ENCODE measurements at regions of chr1 and their contacts with region 1.

Region 1: DNA sequence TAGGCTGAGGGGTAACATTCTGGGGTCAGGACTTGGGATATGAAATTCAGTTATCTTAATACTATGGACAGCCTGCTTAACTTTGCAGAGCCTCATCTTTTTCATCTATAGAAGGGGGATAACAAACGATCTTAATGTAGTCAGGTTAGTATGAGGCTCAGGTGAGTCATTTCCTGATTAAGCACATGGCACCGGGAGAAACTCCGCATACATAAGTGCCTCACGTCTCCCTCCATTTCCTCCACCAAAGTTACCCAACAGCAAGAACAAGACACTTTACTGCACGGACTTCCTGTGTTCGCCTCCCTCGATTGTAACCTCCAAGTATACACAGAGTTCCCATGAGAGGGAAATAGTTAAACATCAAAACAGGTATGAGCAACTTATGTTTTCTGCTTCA is 112.7 kb upstream of the COA6 start:
- DNase-seq: peak; percentile 69
- H3K4me3 Mint-ChIP-seq: no peak overlapping the region
- H3K27ac Mint-ChIP-seq: no peak overlapping the region
- H3K4me1 Mint-ChIP-seq: peaks cover 13% of the 10 kb centered on the region
- H3K27me3 Mint-ChIP-seq: peaks cover 36% of the 10 kb centered on the region

Region 2: GRCh38 chr1:234212764-234213657 is 47.6 kb before region 1 on chr1:
- CTCF ChIA-PET with region 1: interaction called, 12 read pairs
- intact Hi-C with region 1: no loop called
- DNase-seq: peak; percentile 56
- H3K4me3 Mint-ChIP-seq: no peak overlapping the region
- H3K27ac Mint-ChIP-seq: no peak overlapping the region
- H3K4me1 Mint-ChIP-seq: peaks cover 12% of the 10 kb centered on the region
- H3K27me3 Mint-ChIP-seq: peaks cover 43% of the 10 kb centered on the region

Region 3: DNA sequence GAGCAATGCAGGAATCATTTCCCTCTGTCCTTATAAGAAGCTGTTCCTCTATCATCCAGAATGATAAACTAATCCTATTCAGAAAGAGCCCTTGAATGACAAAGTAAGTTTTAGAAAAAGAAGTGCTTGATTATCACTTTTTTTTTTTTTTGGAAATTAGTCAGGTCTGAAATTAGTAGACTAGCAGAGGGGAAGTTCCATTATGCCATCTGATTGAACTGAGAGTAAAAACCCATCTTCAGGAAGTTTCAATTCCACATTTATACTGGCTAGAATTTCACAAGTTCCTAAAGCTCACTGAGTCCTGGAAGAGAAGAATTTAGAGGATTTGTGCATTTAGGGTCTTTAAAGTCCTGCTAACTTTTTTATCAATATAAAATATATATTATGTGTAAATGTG is 16.1 kb before region 1 on chr1:
- CTCF ChIA-PET with region 1: no interaction called
- intact Hi-C with region 1: loop called (anchors 2 kb)
- DNase-seq: no peak
- H3K4me3 Mint-ChIP-seq: no peak overlapping the region
- H3K27ac Mint-ChIP-seq: no peak overlapping the region
- H3K4me1 Mint-ChIP-seq: peaks cover 13% of the 10 kb centered on the region
- H3K27me3 Mint-ChIP-seq: peaks cover 22% of the 10 kb centered on the region

Region 4: GRCh38 chr1:234281826-234282489 is 21.4 kb after region 1 on chr1:
- CTCF ChIA-PET with region 1: no interaction called
- intact Hi-C with region 1: no loop called
- DNase-seq: no peak
- H3K4me3 Mint-ChIP-seq: no peak overlapping the region
- H3K27ac Mint-ChIP-seq: no peak overlapping the region
- H3K4me1 Mint-ChIP-seq: no peaks in the 10 kb centered on the region
- H3K27me3 Mint-ChIP-seq: peaks cover 4% of the 10 kb centered on the region

Region 5: DNA sequence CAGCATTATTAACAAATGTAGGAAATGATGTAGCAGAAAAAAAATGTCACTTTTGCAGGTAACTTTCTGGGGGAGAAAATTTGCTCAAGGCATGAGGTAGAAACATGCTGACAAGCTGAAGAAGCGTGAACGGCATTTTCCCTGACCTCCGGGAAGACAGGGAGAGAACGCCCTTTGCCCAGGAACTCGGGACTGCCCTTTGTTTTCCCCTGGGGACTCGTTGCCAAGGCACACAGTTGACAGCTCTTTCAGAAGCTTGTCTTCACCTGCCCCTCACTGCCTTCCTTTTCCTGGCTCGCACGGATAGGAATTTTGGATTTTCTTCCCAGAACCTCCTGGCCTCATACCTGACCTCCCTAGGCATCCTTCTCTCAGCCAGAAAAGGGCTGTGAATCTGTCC is 60.0 kb after region 1 on chr1:
- CTCF ChIA-PET with region 1: no interaction called
- intact Hi-C with region 1: no loop called
- DNase-seq: no peak
- H3K4me3 Mint-ChIP-seq: no peak overlapping the region
- H3K27ac Mint-ChIP-seq: no peak overlapping the region
- H3K4me1 Mint-ChIP-seq: peaks cover 9% of the 10 kb centered on the region
- H3K27me3 Mint-ChIP-seq: peaks cover 8% of the 10 kb centered on the region

Measured in activated naive CD4-positive, alpha-beta T cell treated with anti-CD3 and anti-CD28 coated beads for 36 hours (primary cell).